ENCODE measurements at regions of chr17 and their contacts with region 1.

Region 1: GRCh38 chr17:14300575-14301278 is at the start of gene HS3ST3B1:
- DNase-seq: peak; percentile 99
- H3K4me3 ChIP-seq: peak within 1 kb of the TSS; percentile 58 to 73 (median 69)
- H3K27ac ChIP-seq: peak within 1 kb of the TSS; percentile 34
- H3K4me1 ChIP-seq: peaks cover 32% of the 10 kb centered on the region
- H3K27me3 ChIP-seq: peaks cover 23% of the 10 kb centered on the region
- CTCF ChIP-seq: no peak
- total RNA-seq, gene HS3ST3B1: 4.0 to 14.7 TPM

Region 2: DNA sequence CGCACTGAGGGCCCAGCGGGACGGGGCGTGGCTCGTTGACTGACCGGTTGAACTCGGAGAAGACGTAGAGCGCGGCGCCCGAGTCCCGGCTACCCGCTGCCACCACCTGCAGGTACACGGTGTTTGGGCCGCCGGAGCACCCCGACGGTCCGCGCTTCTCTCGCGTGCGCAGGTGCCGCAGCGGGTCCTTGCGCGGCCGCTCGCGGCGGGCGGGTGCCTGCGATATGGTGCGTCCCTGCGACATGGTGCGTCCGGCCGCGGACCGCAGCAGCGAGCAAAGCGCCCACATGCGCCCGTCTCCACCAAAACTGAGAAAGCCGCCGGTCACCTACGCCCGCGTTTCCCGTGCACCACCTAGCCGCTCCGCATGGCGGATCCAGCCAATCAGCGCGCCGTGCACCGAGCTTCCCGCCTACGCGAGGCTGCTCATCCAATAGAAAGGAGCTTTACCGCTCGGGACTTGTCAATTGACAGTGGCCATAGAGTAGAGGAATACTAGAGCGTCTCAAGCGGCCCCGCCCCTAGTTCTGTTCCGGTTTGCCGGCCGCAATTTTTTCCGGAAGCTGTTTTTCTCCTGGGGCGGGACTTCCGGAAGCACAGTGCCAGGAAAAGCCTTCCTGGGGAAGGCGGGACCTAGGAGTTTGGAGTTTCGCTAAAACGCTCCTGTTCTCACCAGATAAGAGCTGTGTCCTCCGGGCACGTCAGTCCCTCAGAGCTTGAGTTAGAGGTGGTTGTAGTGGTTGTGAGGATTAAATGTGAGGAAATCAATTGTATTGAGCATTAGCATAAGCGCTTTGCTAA is 1282.9 kb before region 1 on chr17 and contains the start of gene ELAC2:
- CTCF ChIA-PET with region 1: no interaction called
- dilution Hi-C with region 1: no loop called
- in situ Hi-C with region 1: no loop called
- intact Hi-C with region 1: loop called (anchors 5 kb)
- DNase-seq: peak; percentile 98
- H3K4me3 ChIP-seq: peak within 1 kb of the TSS; percentile 61 to 79 (median 65)
- H3K27ac ChIP-seq: peak within 1 kb of the TSS; percentile 81
- H3K4me1 ChIP-seq: peaks cover 6% of the 10 kb centered on the region
- H3K27me3 ChIP-seq: no peaks in the 10 kb centered on the region
- CTCF ChIP-seq: peak in 1 of 2 donors; percentile 20
- total RNA-seq, gene ELAC2: 69.9 to 107 TPM

Region 3: GRCh38 chr17:13393841-13394710 is 906.7 kb before region 1 on chr17:
- CTCF ChIA-PET with region 1: no interaction called
- dilution Hi-C with region 1: no loop called
- in situ Hi-C with region 1: no loop called
- intact Hi-C with region 1: loop called (anchors 5 kb)
- DNase-seq: peak; percentile 89
- H3K4me3 ChIP-seq: no peak overlapping the region
- H3K27ac ChIP-seq: peak overlapping the region; percentile 70
- H3K4me1 ChIP-seq: peaks cover 29% of the 10 kb centered on the region
- H3K27me3 ChIP-seq: no peaks in the 10 kb centered on the region
- CTCF ChIP-seq: no peak

Region 4: GRCh38 chr17:14004927-14005620 is 295.7 kb before region 1 on chr17:
- CTCF ChIA-PET with region 1: no interaction called
- dilution Hi-C with region 1: no loop called
- in situ Hi-C with region 1: no loop called
- intact Hi-C with region 1: no loop called
- DNase-seq: peak; percentile 58
- H3K4me3 ChIP-seq: no peak overlapping the region
- H3K27ac ChIP-seq: no peak overlapping the region
- H3K4me1 ChIP-seq: no peaks in the 10 kb centered on the region
- H3K27me3 ChIP-seq: no peaks in the 10 kb centered on the region
- CTCF ChIP-seq: no peak

Region 5: DNA sequence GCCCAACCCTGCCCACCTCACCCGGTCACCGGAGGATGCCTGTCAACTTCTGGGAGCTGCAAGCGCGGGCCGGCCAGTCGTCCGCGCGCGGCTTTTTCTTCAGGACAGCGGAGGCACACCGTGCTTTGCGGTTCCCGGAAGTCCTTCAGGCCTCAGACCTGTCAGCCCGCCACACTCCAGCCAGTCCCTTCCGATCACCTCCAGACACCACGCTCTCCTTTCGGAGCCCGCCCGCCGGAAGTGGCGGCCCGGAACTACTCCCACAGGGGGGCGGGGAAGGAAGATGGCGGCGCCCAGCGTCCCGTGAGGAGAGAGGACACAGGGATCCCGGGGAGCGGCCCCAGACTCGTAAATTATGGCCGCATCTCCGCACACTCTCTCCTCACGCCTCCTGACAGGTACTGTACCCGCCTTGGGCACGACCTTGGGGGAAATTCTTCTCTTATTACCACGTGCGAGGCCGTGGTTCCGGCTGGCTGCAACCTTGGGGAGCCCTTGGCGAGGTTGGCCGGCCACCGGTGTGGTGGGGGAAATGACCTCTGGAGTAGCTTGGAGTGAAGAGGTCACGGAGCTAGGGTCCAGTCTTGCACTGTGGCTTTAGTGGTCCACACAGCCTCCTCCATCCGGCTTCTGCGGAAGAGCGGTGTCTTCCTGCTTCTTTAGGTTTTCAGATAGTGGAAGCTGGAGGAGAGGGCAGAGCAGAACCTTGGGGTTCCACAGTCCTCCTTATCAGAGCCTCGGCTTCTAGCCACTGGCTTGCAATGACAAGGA is 231.3 kb before region 1 on chr17 and contains the start of gene COX10:
- CTCF ChIA-PET with region 1: no interaction called
- dilution Hi-C with region 1: no loop called
- in situ Hi-C with region 1: no loop called
- intact Hi-C with region 1: loop called (anchors 2 kb)
- DNase-seq: peak; percentile 85
- H3K4me3 ChIP-seq: peak within 1 kb of the TSS; percentile 92 to 97 (median 97)
- H3K27ac ChIP-seq: peak within 1 kb of the TSS; percentile 86
- H3K4me1 ChIP-seq: peaks cover 6% of the 10 kb centered on the region
- H3K27me3 ChIP-seq: no peaks in the 10 kb centered on the region
- CTCF ChIP-seq: no peak
- total RNA-seq, gene COX10: 18.2 to 18.4 TPM

Region 6: DNA sequence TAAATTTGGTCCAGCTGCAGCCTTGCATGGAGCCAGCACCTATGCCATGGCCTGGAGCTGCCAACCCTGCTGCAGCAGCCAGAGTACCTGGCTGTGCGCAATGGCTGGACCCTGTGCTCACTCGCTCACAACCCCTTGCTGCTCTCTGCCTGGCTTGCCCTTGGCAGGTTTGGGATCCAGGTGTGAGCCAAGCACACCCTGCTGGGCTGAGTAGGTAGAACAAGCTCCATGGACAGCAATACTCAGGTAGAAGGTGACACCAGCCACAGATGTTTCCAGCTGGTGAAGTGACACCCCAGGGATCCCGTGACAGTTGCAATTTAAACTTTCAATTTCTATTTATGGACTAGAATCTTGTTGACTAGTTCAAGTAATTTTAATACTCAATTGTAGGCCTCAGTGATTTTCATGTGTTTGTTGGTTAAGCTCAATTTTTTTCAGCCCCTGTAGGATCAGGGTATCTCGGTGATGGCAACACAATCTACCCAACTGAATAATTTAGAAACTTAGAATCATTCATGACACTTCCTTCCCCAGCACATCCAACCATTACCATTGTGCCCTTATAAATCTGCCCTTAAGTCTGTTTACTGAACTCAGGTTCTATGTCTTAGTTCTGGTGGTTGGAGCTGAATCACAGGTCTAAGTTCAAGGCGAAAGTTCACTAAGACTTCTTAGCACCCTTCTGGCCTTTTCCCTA is 484.4 kb after region 1 on chr17:
- CTCF ChIA-PET with region 1: interaction called, 8 read pairs
- dilution Hi-C with region 1: no loop called
- in situ Hi-C with region 1: no loop called
- intact Hi-C with region 1: loop called (anchors 2 kb)
- DNase-seq: peak; percentile 40
- H3K4me3 ChIP-seq: no peak overlapping the region
- H3K27ac ChIP-seq: no peak overlapping the region
- H3K4me1 ChIP-seq: no peaks in the 10 kb centered on the region
- H3K27me3 ChIP-seq: no peaks in the 10 kb centered on the region
- CTCF ChIP-seq: peak; percentile 38 to 67

Region 7: DNA sequence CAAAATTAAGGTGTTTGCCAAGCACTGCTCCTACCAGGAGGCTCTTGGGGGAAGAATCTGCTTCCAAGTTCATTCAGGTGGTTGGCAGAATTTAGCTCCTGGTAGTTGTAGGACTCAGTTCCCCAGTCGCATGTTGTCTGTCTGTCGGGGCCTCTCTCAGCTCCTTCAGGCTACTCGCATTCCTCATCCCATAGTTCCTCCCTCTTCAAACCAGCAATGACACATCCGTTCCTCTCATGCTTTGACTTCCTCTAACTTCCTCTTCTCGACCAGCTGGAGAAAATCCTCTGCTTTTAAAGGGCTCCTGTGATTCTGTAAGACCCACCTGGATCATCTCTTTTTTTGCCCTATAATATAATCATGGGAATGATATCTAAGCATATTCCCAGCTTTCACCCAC is 856.3 kb after region 1 on chr17:
- CTCF ChIA-PET with region 1: no interaction called
- dilution Hi-C with region 1: no loop called
- in situ Hi-C with region 1: no loop called
- intact Hi-C with region 1: loop called (anchors 5 kb)
- DNase-seq: no peak
- H3K4me3 ChIP-seq: no peak overlapping the region
- H3K27ac ChIP-seq: no peak overlapping the region
- H3K4me1 ChIP-seq: no peaks in the 10 kb centered on the region
- H3K27me3 ChIP-seq: peaks cover 2% of the 10 kb centered on the region
- CTCF ChIP-seq: no peak

Measured in mammary epithelial cell (primary cell).